ENCODE measurements at regions of chr6 and their contacts with region 1.

Region 1: GRCh38 chr6:148947621-148948444 is 201.0 kb downstream of the UST start:
- DNase-seq: peak; percentile 82
- ATAC-seq: peak; percentile 95

Region 2: GRCh38 chr6:148578245-148578732 is 369.5 kb before region 1 on chr6:
- intact Hi-C with region 1: loop called (anchors 5 kb)
- DNase-seq: peak; percentile 87
- ATAC-seq: peak; percentile 100

Region 3: GRCh38 chr6:148593130-148593812 is 354.6 kb before region 1 on chr6:
- intact Hi-C with region 1: no loop called
- DNase-seq: no peak
- ATAC-seq: peak; percentile 82

Region 4: DNA sequence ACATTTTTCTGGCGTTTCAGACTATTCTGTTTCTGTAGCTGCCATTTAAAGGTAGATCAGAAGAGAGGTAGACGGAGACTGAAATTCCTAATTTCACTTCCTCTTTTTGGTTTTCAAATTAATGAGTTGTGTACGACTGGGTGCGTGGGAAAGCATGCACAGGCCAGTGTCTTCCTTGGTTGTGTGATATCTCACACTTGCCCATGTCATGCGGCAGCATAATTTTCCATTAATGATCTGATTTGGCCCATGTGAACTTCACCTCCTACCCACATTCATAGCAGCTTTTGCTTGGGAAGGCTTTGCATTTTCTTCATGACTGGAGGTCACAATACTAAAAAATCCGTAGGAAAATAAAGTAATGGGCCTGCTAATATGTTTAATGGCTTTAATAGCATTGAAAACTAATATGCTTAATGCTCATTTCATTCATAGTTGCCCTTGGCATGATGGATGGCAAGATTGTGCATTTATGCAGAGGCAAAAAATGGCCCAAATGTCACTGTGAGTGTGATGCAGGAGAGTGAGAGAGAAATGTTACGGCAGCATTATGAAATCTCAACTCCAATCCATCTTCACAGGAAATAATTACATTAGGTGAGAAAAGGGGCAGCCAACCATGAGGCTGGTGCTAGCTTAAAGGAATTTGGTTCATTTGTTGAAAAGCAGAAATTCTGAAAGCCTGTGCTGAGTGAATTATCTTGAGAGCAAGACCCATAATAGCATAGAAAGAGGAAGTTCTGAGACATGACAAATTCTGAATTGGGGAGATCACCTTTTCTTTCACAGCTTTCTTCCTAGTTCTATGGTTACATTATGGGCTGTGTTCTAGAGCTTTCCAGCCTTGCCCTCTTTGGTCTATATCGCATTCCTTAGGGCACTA is 270.0 kb before region 1 on chr6:
- intact Hi-C with region 1: no loop called
- DNase-seq: no peak
- ATAC-seq: no peak

Region 5: DNA sequence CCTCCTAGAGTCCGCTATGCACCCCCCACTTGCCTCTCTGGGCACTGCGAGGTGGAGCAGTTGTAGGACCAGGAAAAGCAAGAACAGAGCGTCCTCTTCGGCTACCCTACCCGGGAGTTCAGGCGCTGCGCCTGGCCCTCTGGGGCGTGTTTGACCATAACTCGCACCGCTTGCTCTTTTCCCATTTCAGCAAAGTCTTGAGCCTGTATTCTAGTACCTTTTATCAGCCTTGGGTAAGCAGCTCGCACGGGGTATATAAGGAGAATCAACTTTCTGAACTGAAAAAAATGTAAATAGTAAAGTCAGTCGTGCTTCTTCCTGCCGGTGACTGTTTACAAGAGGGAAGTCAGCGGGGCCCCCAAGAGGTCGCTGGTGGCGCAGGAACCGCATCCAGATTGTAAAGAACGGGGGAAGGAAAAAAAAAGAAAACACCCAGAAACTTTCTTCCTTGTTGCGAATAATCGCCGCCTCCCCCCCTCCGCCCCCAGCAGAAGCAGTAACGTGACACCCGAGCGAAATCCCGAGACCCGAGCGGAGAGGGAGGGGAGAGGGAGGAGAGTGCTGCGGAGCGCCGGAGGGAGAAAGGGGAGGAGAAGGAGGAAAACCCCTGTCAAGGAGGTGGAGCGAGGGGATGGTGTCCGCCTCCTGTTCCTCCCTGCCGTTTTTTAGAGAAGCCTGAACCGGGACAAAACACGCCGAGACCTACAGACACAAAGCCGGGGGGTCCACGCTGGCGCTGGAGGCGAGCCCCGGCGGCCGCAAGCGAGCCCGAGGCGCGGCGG is 201.3 kb before region 1 on chr6 and contains the start of gene UST:
- intact Hi-C with region 1: loop called (anchors 5 kb)
- DNase-seq: peak; percentile 86
- ATAC-seq: peak; percentile 91
- total RNA-seq, gene UST: 3.4 TPM

Measured in left ventricle myocardium superior (tissue), 1 donor.